ENCODE measurements at regions of chr9 and their contacts with region 1.

Region 1: DNA sequence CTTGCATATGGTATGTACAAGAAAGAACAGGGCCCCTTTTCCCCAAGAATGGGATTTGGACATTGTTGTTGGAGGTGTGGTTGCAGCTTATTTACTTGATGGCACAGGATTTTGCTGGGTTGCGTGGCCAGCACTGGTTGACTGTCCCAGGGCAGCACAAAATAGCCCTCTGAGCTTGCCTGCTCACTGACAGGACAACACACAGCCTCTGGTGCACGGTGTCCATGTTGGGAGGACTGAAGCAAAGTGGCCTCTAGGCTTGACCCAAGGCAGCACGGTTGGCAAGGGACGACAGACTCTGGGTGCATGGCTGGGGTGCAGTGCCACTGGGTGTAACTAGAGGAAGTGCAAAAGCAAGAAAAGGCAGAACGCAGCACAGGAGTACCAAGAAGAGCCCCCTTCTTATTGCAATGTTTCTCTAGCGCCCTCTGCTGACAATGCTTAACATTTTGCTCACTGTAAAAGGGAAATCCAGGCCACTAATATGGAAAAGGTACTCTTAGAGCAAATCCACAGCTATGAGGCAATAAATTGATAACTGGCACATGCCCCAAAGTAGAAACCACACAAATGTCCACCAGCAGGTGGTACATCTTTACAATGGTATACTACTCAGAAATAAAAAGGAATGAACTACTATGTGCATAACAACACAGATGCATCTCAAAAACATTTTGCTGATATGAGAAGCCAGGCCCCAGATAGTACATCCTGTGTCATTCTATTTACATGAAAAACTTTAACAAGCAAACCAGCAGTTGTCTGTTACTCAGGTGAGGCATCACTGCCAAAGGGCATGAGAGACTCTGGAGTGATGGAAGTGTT is 47.4 kb upstream of the BARX1 start:
- DNase-seq: no peak
- ATAC-seq: no peak
- H3K4me3 Mint-ChIP-seq: no peak overlapping the region
- H3K27ac Mint-ChIP-seq: no peak overlapping the region
- H3K4me1 Mint-ChIP-seq: no peaks in the 10 kb centered on the region
- H3K27me3 Mint-ChIP-seq: peaks cover 23% of the 10 kb centered on the region
- CTCF ChIP-seq: no peak

Region 2: GRCh38 chr9:94014065-94014654 is 11.6 kb after region 1 on chr9:
- CTCF ChIA-PET with region 1: interaction called, 13 read pairs
- POLR2A ChIA-PET with region 1: no interaction called
- intact Hi-C with region 1: no loop called
- DNase-seq: no peak
- ATAC-seq: no peak
- H3K4me3 Mint-ChIP-seq: no peak overlapping the region
- H3K27ac Mint-ChIP-seq: no peak overlapping the region
- H3K4me1 Mint-ChIP-seq: peaks cover 3% of the 10 kb centered on the region
- H3K27me3 Mint-ChIP-seq: no peaks in the 10 kb centered on the region
- CTCF ChIP-seq: no peak

Region 3: GRCh38 chr9:95477441-95477840 is 1474.9 kb after region 1 on chr9:
- CTCF ChIA-PET with region 1: no interaction called
- POLR2A ChIA-PET with region 1: no interaction called
- intact Hi-C with region 1: no loop called
- DNase-seq: no peak
- ATAC-seq: no peak
- H3K4me3 Mint-ChIP-seq: no peak overlapping the region
- H3K27ac Mint-ChIP-seq: no peak overlapping the region
- H3K4me1 Mint-ChIP-seq: no peaks in the 10 kb centered on the region
- H3K27me3 Mint-ChIP-seq: peaks cover 17% of the 10 kb centered on the region
- CTCF ChIP-seq: no peak